Caco-2 (cell line): ENCODE measurements at regions of chr15 and their contacts with region 1.

Region 1: GRCh38 chr15:40893733-40894688 is at the start of gene VPS18:
- DNase-seq: peak; percentile 97 to 98
- H3K4me3 ChIP-seq: peak within 1 kb of the TSS; percentile 87
- H3K4me3 Mint-ChIP-seq: peak within 1 kb of the TSS; percentile 88
- H3K27ac Mint-ChIP-seq: peak within 1 kb of the TSS; percentile 87
- H3K4me1 ChIP-seq: peaks cover 14% of the 10 kb centered on the region
- H3K4me1 Mint-ChIP-seq: peaks cover 23% of the 10 kb centered on the region
- H3K27me3 ChIP-seq: no peaks in the 10 kb centered on the region
- H3K27me3 Mint-ChIP-seq: no peaks in the 10 kb centered on the region
- CTCF ChIP-seq: peak; percentile 84 to 85
- total RNA-seq, gene VPS18: 27.3 and 29.3 TPM in 2 replicates

Region 2: GRCh38 chr15:40633143-40633542 is 260.9 kb before region 1 on chr15:
- CTCF ChIA-PET with region 1: no interaction called
- POLR2A ChIA-PET with region 1: no interaction called
- intact Hi-C with region 1: no loop called
- DNase-seq: no peak
- H3K4me3 ChIP-seq: no peak overlapping the region
- H3K4me3 Mint-ChIP-seq: no peak overlapping the region
- H3K27ac Mint-ChIP-seq: no peak overlapping the region
- H3K4me1 ChIP-seq: no peaks in the 10 kb centered on the region
- H3K4me1 Mint-ChIP-seq: no peaks in the 10 kb centered on the region
- H3K27me3 ChIP-seq: no peaks in the 10 kb centered on the region
- H3K27me3 Mint-ChIP-seq: no peaks in the 10 kb centered on the region
- CTCF ChIP-seq: no peak

Region 3: GRCh38 chr15:40694688-40695468 is 199.1 kb before region 1 on chr15 and contains the start of gene RAD51:
- CTCF ChIA-PET with region 1: interaction called, 3 read pairs
- POLR2A ChIA-PET with region 1: interaction called, 6 read pairs
- intact Hi-C with region 1: loop called (anchors 10 kb)
- DNase-seq: peak; percentile 93 to 95
- H3K4me3 ChIP-seq: peak within 1 kb of the TSS; percentile 83
- H3K4me3 Mint-ChIP-seq: peak within 1 kb of the TSS; percentile 92
- H3K27ac Mint-ChIP-seq: peak within 1 kb of the TSS; percentile 99
- H3K4me1 ChIP-seq: peaks cover 11% of the 10 kb centered on the region; the same call in 1 of the 2 replicates
- H3K4me1 Mint-ChIP-seq: peaks cover 7% of the 10 kb centered on the region
- H3K27me3 ChIP-seq: no peaks in the 10 kb centered on the region
- H3K27me3 Mint-ChIP-seq: no peaks in the 10 kb centered on the region
- CTCF ChIP-seq: no peak
- total RNA-seq, gene RAD51: 37.8 and 47.0 TPM in 2 replicates

Region 4: GRCh38 chr15:40754883-40755811 is 138.9 kb before region 1 on chr15 and contains the start of gene RMDN3:
- CTCF ChIA-PET with region 1: no interaction called
- POLR2A ChIA-PET with region 1: no interaction called
- intact Hi-C with region 1: loop called (anchors 2 kb)
- DNase-seq: peak; percentile 93 to 96
- H3K4me3 ChIP-seq: peak within 1 kb of the TSS; percentile 68
- H3K4me3 Mint-ChIP-seq: peak within 1 kb of the TSS; percentile 91
- H3K27ac Mint-ChIP-seq: peak within 1 kb of the TSS; percentile 99
- H3K4me1 ChIP-seq: no peaks in the 10 kb centered on the region
- H3K4me1 Mint-ChIP-seq: no peaks in the 10 kb centered on the region
- H3K27me3 ChIP-seq: no peaks in the 10 kb centered on the region
- H3K27me3 Mint-ChIP-seq: no peaks in the 10 kb centered on the region
- CTCF ChIP-seq: no peak
- total RNA-seq, gene RMDN3: 46.3 and 48.0 TPM in 2 replicates

Region 5: DNA sequence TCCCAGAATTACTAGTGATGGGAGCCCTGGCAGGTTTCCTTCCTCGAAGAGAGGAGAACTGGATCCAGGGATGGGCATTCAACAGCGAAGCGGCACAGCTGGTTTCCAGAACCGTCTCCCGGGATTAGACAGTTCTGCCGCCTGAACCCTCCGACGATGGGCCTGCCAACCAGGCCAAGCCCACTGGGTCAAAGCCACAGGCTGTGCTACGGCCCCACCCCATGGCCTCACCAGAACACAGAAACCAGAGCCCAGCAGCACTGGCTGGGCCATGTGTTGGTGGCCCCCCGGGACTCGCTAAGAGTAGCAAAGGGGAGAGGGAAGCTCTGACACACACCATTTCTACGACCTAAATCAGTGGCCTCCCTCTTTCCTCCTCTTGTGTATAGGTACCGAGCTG is 122.0 kb before region 1 on chr15:
- CTCF ChIA-PET with region 1: no interaction called
- POLR2A ChIA-PET with region 1: no interaction called
- intact Hi-C with region 1: no loop called
- DNase-seq: no peak
- H3K4me3 ChIP-seq: no peak overlapping the region
- H3K4me3 Mint-ChIP-seq: no peak overlapping the region
- H3K27ac Mint-ChIP-seq: no peak overlapping the region
- H3K4me1 ChIP-seq: no peaks in the 10 kb centered on the region
- H3K4me1 Mint-ChIP-seq: no peaks in the 10 kb centered on the region
- H3K27me3 ChIP-seq: no peaks in the 10 kb centered on the region
- H3K27me3 Mint-ChIP-seq: no peaks in the 10 kb centered on the region
- CTCF ChIP-seq: no peak

Region 6: DNA sequence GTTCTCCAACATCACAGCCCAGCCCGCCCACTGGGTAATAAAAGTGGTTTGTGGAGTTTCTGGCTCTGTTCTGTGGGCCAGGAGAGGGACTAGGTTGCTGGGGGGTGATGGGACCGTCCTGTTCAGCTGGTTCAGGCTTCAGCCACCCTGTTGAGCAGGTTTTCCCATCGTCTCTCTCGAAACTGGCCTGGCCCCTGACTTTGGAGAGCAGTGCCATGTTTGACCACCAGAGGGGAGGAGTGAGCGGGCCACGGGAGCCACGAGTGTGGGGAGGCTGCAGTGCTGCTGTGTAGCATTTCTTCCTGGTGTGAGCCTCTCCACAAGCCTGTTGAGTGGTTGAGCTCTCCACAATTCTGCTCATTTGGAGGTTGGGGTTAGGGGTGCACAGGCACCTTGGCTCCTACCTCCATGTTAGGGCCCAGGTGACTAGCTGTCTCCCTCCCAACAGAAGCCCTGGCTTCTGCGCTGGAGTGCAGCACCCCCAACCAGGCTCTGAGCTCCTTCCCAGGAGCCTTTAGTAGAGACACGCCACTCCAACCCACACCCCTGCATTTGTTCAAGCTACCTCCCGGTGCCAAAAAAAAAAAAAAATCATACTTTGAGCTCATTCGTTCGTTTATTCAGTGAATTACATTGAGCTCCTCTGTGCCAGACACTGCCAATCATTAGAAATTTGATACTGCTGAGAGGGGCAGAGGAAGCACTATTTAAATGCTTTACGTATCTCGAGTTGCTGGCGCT is 36.2 kb before region 1 on chr15:
- CTCF ChIA-PET with region 1: interaction called, 112 read pairs
- POLR2A ChIA-PET with region 1: interaction called, 23 read pairs
- intact Hi-C with region 1: loop called (anchors 1 kb)
- DNase-seq: peak; percentile 92 to 96
- H3K4me3 ChIP-seq: no peak overlapping the region
- H3K4me3 Mint-ChIP-seq: peak overlapping the region; percentile 56
- H3K27ac Mint-ChIP-seq: peak overlapping the region; percentile 86
- H3K4me1 ChIP-seq: peaks cover 24% of the 10 kb centered on the region
- H3K4me1 Mint-ChIP-seq: peaks cover 39% of the 10 kb centered on the region
- H3K27me3 ChIP-seq: no peaks in the 10 kb centered on the region
- H3K27me3 Mint-ChIP-seq: no peaks in the 10 kb centered on the region
- CTCF ChIP-seq: peak; percentile 89 to 94

Region 7: GRCh38 chr15:40906091-40906990 is 12.3 kb after region 1 on chr15:
- CTCF ChIA-PET with region 1: interaction called, 14 read pairs
- POLR2A ChIA-PET with region 1: interaction called, 10 read pairs
- intact Hi-C with region 1: no loop called
- DNase-seq: peak; percentile 88 to 92
- H3K4me3 ChIP-seq: peak overlapping the region; percentile 16; the same call in 1 of the 2 replicates
- H3K4me3 Mint-ChIP-seq: no peak overlapping the region
- H3K27ac Mint-ChIP-seq: peak overlapping the region; percentile 35
- H3K4me1 ChIP-seq: peaks cover 28% of the 10 kb centered on the region
- H3K4me1 Mint-ChIP-seq: peaks cover 12% of the 10 kb centered on the region
- H3K27me3 ChIP-seq: no peaks in the 10 kb centered on the region
- H3K27me3 Mint-ChIP-seq: no peaks in the 10 kb centered on the region
- CTCF ChIP-seq: peak; percentile 86 to 89

Region 8: GRCh38 chr15:41079717-41080116 is 185.7 kb after region 1 on chr15:
- CTCF ChIA-PET with region 1: no interaction called
- POLR2A ChIA-PET with region 1: no interaction called
- intact Hi-C with region 1: no loop called
- DNase-seq: no peak
- H3K4me3 ChIP-seq: no peak overlapping the region
- H3K4me3 Mint-ChIP-seq: no peak overlapping the region
- H3K27ac Mint-ChIP-seq: no peak overlapping the region
- H3K4me1 ChIP-seq: no peaks in the 10 kb centered on the region
- H3K4me1 Mint-ChIP-seq: no peaks in the 10 kb centered on the region
- H3K27me3 ChIP-seq: no peaks in the 10 kb centered on the region
- H3K27me3 Mint-ChIP-seq: no peaks in the 10 kb centered on the region
- CTCF ChIP-seq: no peak

Region 9: DNA sequence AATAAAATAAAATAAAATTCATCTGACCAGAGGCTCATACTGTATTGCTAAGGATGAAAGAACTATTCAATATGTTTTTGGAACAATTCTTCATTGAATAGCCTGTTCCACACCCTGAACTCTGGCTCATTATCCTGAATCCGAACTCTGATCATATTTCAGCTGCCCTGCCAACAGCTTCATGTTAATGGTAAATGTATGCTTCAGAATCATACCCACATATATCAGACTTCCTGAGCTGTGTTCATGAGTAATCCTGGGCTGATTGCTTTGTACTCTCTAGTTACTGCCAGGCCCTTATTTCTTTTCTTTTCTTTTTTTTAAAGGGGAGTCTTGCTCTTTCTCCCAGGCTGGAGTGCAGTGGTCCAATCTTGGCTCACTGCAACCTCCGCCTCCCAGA is 210.2 kb after region 1 on chr15:
- CTCF ChIA-PET with region 1: no interaction called
- POLR2A ChIA-PET with region 1: no interaction called
- intact Hi-C with region 1: no loop called
- DNase-seq: no peak
- H3K4me3 ChIP-seq: no peak overlapping the region
- H3K4me3 Mint-ChIP-seq: no peak overlapping the region
- H3K27ac Mint-ChIP-seq: no peak overlapping the region
- H3K4me1 ChIP-seq: no peaks in the 10 kb centered on the region
- H3K4me1 Mint-ChIP-seq: peaks cover 6% of the 10 kb centered on the region
- H3K27me3 ChIP-seq: no peaks in the 10 kb centered on the region
- H3K27me3 Mint-ChIP-seq: no peaks in the 10 kb centered on the region
- CTCF ChIP-seq: no peak